A673 (cell line): ENCODE measurements at regions of chr4 and their contacts with region 1.

Region 1: GRCh38 chr4:51895813-51896408 is 53.0 kb downstream of the DCUN1D4 start:
- DNase-seq: peak; percentile 76
- H3K4me3 ChIP-seq: no peak overlapping the region
- H3K27ac ChIP-seq: peak overlapping the region; percentile 45
- H3K4me1 ChIP-seq: no peaks in the 10 kb centered on the region
- H3K27me3 ChIP-seq: no peaks in the 10 kb centered on the region
- CTCF ChIP-seq: peak; percentile 64

Region 2: GRCh38 chr4:51880016-51880915 is 15.6 kb before region 1 on chr4:
- CTCF ChIA-PET with region 1: interaction called, 10 read pairs
- POLR2A ChIA-PET with region 1: no interaction called
- intact Hi-C with region 1: no loop called
- DNase-seq: no peak
- H3K4me3 ChIP-seq: no peak overlapping the region
- H3K27ac ChIP-seq: no peak overlapping the region
- H3K4me1 ChIP-seq: no peaks in the 10 kb centered on the region
- H3K27me3 ChIP-seq: no peaks in the 10 kb centered on the region
- CTCF ChIP-seq: no peak

Region 3: DNA sequence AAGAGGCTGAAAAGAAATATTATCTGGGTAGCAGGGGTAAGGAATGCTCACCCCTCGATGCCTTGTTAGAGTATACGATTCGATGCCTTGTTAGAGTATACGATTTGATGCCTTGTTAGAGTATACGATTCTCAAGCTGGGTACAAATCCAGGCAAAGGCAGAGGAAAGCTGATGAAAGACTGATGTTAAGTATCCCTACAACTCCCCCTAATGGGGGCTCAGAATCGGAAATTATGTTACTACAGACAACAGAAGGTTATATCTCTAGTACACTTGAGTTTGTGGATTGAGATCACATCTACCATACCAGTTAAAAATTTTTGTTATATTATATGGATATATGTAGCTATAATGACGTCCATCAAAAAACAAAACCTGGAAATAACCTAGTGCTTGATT is 119.5 kb after region 1 on chr4:
- CTCF ChIA-PET with region 1: no interaction called
- POLR2A ChIA-PET with region 1: no interaction called
- intact Hi-C with region 1: loop called (anchors 5 kb)
- DNase-seq: peak; percentile 1
- H3K4me3 ChIP-seq: no peak overlapping the region
- H3K27ac ChIP-seq: no peak overlapping the region
- H3K4me1 ChIP-seq: no peaks in the 10 kb centered on the region
- H3K27me3 ChIP-seq: no peaks in the 10 kb centered on the region
- CTCF ChIP-seq: peak; percentile 28; the same call in 1 of the 2 replicates